ENCODE measurements at regions of chr10 and their contacts with region 1.

Region 1: DNA sequence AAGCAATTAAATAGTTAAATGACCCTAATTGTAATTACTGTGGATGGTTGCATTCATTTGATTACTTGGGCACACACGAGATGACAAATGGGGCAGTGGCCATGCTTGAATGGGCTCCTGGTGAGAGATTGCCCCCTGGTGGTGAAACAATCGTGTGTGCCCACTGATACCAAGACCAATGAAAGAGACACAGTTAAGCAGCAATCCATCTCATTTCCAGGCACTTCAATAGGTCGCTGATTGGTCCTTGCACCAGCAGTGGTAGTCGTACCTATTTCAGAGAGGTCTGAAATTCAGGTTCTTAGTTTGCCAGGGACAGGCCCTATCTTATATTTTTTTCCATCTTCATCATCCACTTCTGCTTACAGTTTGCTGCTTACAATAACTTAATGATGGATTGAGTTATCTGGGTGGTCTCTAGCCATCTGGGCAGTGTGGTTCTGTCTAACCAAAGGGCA is 8.3 kb downstream of the PCBD1 start:
- DNase-seq: peak; percentile 80 to 84
- H3K4me3 ChIP-seq: no peak overlapping the region
- H3K27ac ChIP-seq: no peak overlapping the region
- H3K4me1 ChIP-seq: no peaks in the 10 kb centered on the region
- H3K27me3 ChIP-seq: no peaks in the 10 kb centered on the region
- CTCF ChIP-seq: peak; percentile 91 to 92

Region 2: DNA sequence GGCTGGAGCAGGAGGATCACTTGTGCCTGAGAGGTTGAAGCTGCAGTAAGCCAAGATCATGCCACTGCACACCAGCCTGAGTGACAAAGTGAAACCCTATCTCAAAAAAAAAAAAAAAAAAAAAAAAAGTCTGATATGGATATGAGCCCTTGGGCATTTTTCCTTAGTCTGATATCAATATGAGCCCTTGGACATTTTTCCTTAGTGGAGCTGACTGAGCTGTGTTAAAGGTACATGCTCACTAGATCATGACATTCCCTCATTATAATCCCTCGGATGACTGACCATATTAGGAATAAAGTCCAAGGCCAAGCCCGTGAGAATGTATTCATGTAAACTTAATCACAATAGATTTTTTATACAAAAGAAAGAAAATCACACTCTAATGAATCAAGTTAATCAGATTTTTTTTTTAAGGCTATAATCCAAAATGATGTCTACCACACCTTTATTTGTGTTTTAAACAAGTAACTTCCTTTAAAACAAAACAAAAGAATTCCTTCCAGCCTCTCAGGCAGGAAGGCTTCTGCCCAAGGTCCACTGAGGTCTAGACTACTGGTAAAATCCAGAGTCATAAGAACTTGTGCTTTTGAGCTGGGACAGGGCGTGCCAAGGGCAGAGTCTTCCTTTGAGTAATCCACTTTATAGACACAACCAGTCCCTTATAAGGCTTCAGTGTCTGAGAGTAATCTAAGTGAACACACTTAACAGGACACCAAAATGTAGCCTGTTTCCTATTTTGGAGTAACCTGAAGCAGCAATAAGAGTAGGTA is 652.4 kb before region 1 on chr10:
- intact Hi-C with region 1: no loop called
- DNase-seq: no peak
- H3K4me3 ChIP-seq: no peak overlapping the region
- H3K27ac ChIP-seq: peak overlapping the region in 1 of 2 donors; percentile 19
- H3K4me1 ChIP-seq: peaks cover 0 to 31% (median 10%) of the 10 kb centered on the region in 4 donors
- H3K27me3 ChIP-seq: no peaks in the 10 kb centered on the region
- CTCF ChIP-seq: no peak

Region 3: DNA sequence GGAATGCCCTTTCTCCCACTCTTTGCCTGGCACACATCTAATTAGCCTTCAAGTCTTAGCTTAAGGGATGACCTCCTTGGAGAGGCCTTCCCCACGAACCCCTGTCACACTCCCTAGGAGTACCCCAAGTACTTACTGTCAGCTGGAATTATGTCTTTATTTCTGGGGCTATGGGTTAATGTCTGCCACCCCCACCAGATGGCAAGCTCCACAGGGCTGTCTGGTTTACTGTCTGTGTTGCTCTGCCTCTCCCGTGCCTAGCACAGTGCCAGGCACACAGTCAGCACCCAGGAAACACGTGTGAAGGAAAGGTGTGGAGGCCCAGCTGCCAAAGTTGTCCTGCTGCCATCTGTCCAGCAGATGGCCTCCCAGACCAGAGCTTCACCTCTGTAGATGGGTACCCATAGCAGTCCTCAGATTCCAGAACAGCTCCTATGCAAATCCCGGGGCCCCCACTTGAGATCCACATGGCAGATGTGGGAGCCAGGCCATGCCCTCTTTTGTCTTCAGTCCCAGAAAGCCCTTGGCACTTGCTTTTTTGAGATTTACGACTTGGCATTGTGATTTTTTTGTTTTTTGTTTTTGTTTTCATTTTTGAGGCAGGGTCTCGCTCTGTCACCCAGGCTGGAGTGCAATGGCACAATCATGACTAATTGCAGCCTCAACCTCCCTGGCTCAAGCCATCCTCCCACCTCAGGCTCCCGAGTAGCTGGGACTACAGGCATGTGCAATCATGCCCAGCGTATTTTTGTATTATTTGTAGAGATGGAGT is 418.7 kb before region 1 on chr10:
- intact Hi-C with region 1: loop called (anchors 5 kb)
- DNase-seq: peak in 1 of 2 donors; percentile 54
- H3K4me3 ChIP-seq: no peak overlapping the region
- H3K27ac ChIP-seq: peak overlapping the region; percentile 41 to 89
- H3K4me1 ChIP-seq: peaks cover 0 to 51% (median 41%) of the 10 kb centered on the region in 4 donors
- H3K27me3 ChIP-seq: no peaks in the 10 kb centered on the region
- CTCF ChIP-seq: peak; percentile 88 to 89

Region 4: GRCh38 chr10:70549962-70550458 is 330.1 kb before region 1 on chr10:
- intact Hi-C with region 1: loop called (anchors 10 kb)
- DNase-seq: peak; percentile 65 to 76
- H3K4me3 ChIP-seq: no peak overlapping the region
- H3K27ac ChIP-seq: no peak overlapping the region
- H3K4me1 ChIP-seq: peaks cover 0 to 9% (median 5%) of the 10 kb centered on the region in 4 donors
- H3K27me3 ChIP-seq: no peaks in the 10 kb centered on the region
- CTCF ChIP-seq: peak; percentile 88 to 90

Region 5: GRCh38 chr10:70815504-70816219 is 64.4 kb before region 1 on chr10 and contains the start of gene SGPL1:
- intact Hi-C with region 1: loop called (anchors 1 kb)
- DNase-seq: peak; percentile 84 to 90
- H3K4me3 ChIP-seq: peak within 1 kb of the TSS; percentile 80 to 81
- H3K27ac ChIP-seq: peak within 1 kb of the TSS; percentile 87 to 93
- H3K4me1 ChIP-seq: peaks cover 0 to 16% (median 8%) of the 10 kb centered on the region in 4 donors
- H3K27me3 ChIP-seq: no peaks in the 10 kb centered on the region
- CTCF ChIP-seq: peak; percentile 94 to 99

Measured in tibial artery (tissue), 4 donors.